ENCODE measurements at regions of chr11 and their contacts with region 1.

Region 1: GRCh38 chr11:106076919-106077608 is at the start of gene KBTBD3:
- DNase-seq: peak; percentile 98
- ATAC-seq: peak; percentile 95
- H3K4me3 ChIP-seq: peak within 1 kb of the TSS; percentile 80 to 95
- H3K27ac ChIP-seq: peak within 1 kb of the TSS; percentile 86
- H3K4me1 ChIP-seq: peaks cover 6 to 11% of the 10 kb centered on the region in 2 experiments; a peak in 2 of 4 replicates
- H3K27me3 ChIP-seq: no peaks in the 10 kb centered on the region
- CTCF ChIP-seq: peak; percentile 23 to 54 (median 50); a peak in 5 of 6 replicates
- POLR2A ChIP-seq: peak; percentile 21
- RAD21 ChIP-seq: no peak
- total RNA-seq, gene KBTBD3: 10.4 TPM

Region 2: DNA sequence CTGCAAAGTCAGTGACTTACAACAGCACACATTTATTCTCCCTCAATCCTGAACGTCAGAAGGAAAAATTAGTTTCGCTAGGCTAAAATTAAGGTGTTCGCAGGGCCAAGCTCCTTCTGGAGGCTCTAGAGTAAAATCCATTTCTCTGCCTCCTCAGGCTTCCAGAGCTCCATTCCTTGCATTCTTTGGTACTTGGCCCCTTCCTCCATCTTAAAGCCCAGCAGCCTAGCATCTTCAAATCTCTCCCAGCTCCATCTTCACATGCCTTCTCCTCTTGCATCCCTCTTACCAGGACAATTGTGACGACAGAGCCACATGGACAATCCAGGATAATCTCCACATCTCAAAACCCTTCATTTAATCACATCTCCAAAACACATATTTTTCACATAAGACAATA is 302.2 kb before region 1 on chr11:
- CTCF ChIA-PET with region 1: no interaction called
- POLR2A ChIA-PET with region 1: no interaction called
- RAD21 ChIA-PET with region 1: no interaction called
- intact Hi-C with region 1: no loop called
- DNase-seq: no peak
- ATAC-seq: no peak
- H3K4me3 ChIP-seq: no peak overlapping the region
- H3K27ac ChIP-seq: no peak overlapping the region
- H3K4me1 ChIP-seq: no peaks in the 10 kb centered on the region
- H3K27me3 ChIP-seq: no peaks in the 10 kb centered on the region
- CTCF ChIP-seq: no peak
- POLR2A ChIP-seq: no peak
- RAD21 ChIP-seq: no peak

Region 3: GRCh38 chr11:106021967-106022794 is 54.9 kb before region 1 on chr11 and contains the start of gene MSANTD4:
- CTCF ChIA-PET with region 1: no interaction called
- POLR2A ChIA-PET with region 1: no interaction called
- RAD21 ChIA-PET with region 1: no interaction called
- intact Hi-C with region 1: loop called (anchors 2 kb)
- DNase-seq: peak; percentile 98
- ATAC-seq: peak; percentile 93
- H3K4me3 ChIP-seq: peak within 1 kb of the TSS; percentile 85 to 86
- H3K27ac ChIP-seq: peak within 1 kb of the TSS; percentile 61
- H3K4me1 ChIP-seq: peaks cover 14 to 19% of the 10 kb centered on the region in 2 experiments; a peak in 3 of 4 replicates
- H3K27me3 ChIP-seq: no peaks in the 10 kb centered on the region
- CTCF ChIP-seq: no peak
- POLR2A ChIP-seq: peak; percentile 30
- RAD21 ChIP-seq: no peak
- total RNA-seq, gene MSANTD4: 15.7 TPM